Dorsolateral prefrontal cortex (tissue), 120 donors: ENCODE measurements at regions of chr17 and their contacts with region 1.

Region 1: GRCh38 chr17:39694593-39694992 is 5.3 kb upstream of the ERBB2 start:
- DNase-seq: no peak
- H3K4me3 ChIP-seq: no peak overlapping the region
- H3K27ac ChIP-seq: no peak overlapping the region
- H3K27me3 ChIP-seq: peaks cover 0 to 34% (median 12%) of the 10 kb centered on the region in 45 donors
- CTCF ChIP-seq: no peak

Region 2: DNA sequence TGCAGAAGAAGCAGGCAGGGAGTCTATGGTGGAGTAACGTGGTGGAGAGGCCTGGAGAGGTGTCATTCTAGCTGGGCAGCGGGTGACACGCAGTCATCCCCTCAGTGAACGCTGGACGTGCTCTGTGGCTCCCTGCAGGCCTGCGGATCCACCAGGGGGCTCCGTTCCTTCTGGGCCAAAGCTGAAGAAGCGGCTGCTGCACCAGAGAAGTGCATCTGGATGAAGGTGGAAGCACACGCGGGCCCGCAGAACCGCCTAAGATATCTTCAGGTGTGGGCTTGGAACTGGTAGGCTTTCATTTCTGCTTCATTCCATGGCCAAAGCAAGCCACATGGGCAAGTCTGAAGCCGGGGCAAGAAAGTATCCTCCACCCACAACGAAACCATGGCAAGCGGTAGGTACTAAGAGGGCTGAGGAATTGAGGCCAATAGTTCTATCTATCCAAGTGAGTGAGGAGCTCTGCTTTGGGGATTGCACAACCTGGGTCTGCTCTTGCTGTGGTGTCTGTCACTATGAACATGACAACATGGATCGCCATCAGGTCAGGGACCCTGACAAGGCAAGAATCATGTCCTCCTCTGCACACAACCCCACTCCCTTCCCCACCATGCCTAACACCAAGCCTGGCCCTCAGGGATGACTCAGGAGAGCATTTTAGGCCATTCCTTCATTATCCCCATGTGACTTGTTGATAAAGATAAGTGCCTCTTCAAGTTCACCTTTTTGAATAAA is 648.5 kb before region 1 on chr17:
- intact Hi-C with region 1: no loop called
- DNase-seq: no peak
- H3K4me3 ChIP-seq: no peak overlapping the region
- H3K27ac ChIP-seq: no peak overlapping the region
- H3K27me3 ChIP-seq: peaks cover 0 to 3% (median 0%) of the 10 kb centered on the region in 45 donors
- CTCF ChIP-seq: no peak

Region 3: GRCh38 chr17:39517224-39517623 is 177.4 kb before region 1 on chr17:
- intact Hi-C with region 1: no loop called
- DNase-seq: no peak
- H3K4me3 ChIP-seq: no peak overlapping the region
- H3K27ac ChIP-seq: peak overlapping the region in 16 of 59 donors; percentile 0 to 64 (median 30)
- H3K27me3 ChIP-seq: no peaks in the 10 kb centered on the region
- CTCF ChIP-seq: no peak

Region 4: DNA sequence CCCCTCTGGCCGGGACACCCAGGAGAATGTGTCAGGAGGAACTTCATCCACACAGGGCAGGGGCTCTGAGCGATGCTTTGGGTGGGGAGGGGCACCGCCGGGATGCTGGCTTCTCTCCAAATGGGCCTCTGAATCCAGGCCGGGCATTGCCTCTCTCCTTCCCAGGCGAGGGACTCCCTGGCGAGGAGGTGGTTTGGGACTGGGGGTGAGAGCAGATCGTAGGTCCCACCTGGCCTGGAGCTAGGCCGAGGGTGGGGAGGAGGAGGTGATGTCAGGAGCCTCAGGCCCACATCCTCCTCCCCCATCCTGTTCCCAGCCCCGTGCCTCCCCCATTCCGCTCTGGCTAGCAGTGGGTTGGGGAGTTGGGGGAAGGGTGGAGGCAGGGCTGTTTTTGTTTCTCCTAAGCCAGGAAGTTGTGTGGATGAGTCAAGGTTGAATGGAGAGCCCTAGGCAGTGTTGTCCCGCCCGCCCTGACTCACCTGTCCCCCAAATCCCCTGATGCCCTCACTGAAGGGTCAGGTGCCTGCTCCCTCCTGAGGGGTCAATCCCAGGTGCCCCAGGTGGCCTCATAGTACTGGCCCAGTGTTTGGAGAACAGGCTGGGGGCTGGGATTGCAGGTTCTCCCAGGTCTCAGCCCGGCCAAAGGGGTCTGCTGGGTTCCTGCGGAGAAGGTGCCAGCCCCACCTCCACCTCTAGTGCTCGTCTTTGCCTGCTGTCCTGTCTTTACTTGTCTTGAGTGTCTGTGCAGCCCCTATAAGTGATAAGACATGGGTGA is 46.0 kb after region 1 on chr17:
- intact Hi-C with region 1: loop called in 1 of 2 experiments (anchors 5 kb)
- DNase-seq: no peak
- H3K4me3 ChIP-seq: peak overlapping the region in 1 of 59 donors; percentile 59
- H3K27ac ChIP-seq: no peak overlapping the region
- H3K27me3 ChIP-seq: peaks cover 0 to 83% (median 49%) of the 10 kb centered on the region in 45 donors
- CTCF ChIP-seq: no peak